ENCODE measurements at regions of chr14 and their contacts with region 1.

Region 1: DNA sequence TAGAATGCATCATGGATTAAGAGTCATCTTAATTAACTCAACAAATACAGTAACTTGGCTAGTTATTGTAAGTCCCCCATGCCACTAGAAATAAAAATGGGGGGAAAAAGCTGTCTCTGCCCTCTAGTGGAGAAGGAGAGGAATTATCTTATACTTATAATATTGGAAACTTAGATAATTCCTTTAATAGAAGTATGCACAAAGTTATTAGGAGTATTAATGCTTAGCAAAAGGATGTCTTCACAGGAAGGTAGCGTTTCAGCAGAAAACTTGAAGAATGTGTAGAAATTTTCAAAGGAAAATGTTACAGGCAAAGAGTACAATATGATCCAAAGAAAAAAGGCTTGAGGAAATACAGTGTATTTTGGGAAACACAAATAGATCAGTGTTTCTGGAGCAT is 19.8 kb downstream of the OR5AU1 start:
- DNase-seq: no peak
- H3K4me3 ChIP-seq: no peak overlapping the region
- H3K27ac ChIP-seq: no peak overlapping the region
- H3K4me1 ChIP-seq: peaks cover 0 to 3% (median 0%) of the 10 kb centered on the region in 4 experiments; a peak in 5 of 7 replicates
- H3K27me3 ChIP-seq: peaks cover 0 to 1% (median 0%) of the 10 kb centered on the region in 4 experiments; a peak in 1 of 7 replicates
- CTCF ChIP-seq: peak in 2 of 3 experiments; percentile 19 to 55; a peak in 2 of 4 replicates
- EP300 ChIP-seq: no peak
- POLR2A ChIP-seq: no peak
- RAD21 ChIP-seq: peak in 1 of 2 experiments; percentile 26; a peak in 2 of 4 replicates

Region 2: GRCh38 chr14:21059842-21060613 is 76.0 kb before region 1 on chr14:
- CTCF ChIA-PET with region 1: no interaction called
- POLR2A ChIA-PET with region 1: no interaction called
- DNase-seq: no peak
- H3K4me3 ChIP-seq: no peak overlapping the region
- H3K27ac ChIP-seq: no peak overlapping the region
- H3K4me1 ChIP-seq: no peaks in the 10 kb centered on the region; a peak in 2 of 7 replicates
- H3K27me3 ChIP-seq: no peaks in the 10 kb centered on the region; a peak in 1 of 7 replicates
- CTCF ChIP-seq: no peak
- EP300 ChIP-seq: no peak
- POLR2A ChIP-seq: no peak
- RAD21 ChIP-seq: no peak

Region 3: GRCh38 chr14:21121106-21121505 is 14.9 kb before region 1 on chr14:
- CTCF ChIA-PET with region 1: interaction called, 28 read pairs
- POLR2A ChIA-PET with region 1: no interaction called
- DNase-seq: no peak
- H3K4me3 ChIP-seq: no peak overlapping the region
- H3K27ac ChIP-seq: no peak overlapping the region
- H3K4me1 ChIP-seq: no peaks in the 10 kb centered on the region
- H3K27me3 ChIP-seq: no peaks in the 10 kb centered on the region
- CTCF ChIP-seq: no peak
- EP300 ChIP-seq: no peak
- POLR2A ChIP-seq: no peak
- RAD21 ChIP-seq: no peak

Region 4: GRCh38 chr14:21155963-21156362 is 19.9 kb after region 1 on chr14 and contains the start of gene OR5AU1:
- CTCF ChIA-PET with region 1: interaction called, 11 read pairs
- POLR2A ChIA-PET with region 1: no interaction called
- DNase-seq: no peak
- H3K4me3 ChIP-seq: no peak within 1 kb of the TSS
- H3K27ac ChIP-seq: no peak within 1 kb of the TSS
- H3K4me1 ChIP-seq: no peaks in the 10 kb centered on the region
- H3K27me3 ChIP-seq: no peaks in the 10 kb centered on the region
- CTCF ChIP-seq: no peak
- EP300 ChIP-seq: no peak
- POLR2A ChIP-seq: no peak
- RAD21 ChIP-seq: no peak
- total RNA-seq, gene OR5AU1: not detected in 2 replicates

Region 5: DNA sequence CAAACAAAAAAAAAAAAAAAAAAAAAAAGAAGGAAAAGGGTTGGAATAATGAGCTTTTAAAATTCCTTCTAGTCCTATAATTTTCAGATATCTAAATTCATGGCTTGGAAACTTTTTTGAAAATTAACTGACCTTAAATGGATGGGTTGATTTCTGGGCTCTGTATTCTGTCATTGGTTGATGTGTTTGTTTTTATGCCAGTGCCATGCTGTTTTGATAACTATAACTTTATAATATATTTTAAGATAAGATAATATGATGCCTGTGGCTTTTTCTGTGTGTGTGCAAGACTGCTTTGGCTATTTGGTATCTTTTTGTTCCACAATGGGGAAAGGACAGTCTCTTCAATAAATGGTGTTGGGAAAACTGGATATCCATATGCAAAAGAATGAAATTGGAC is 436.6 kb after region 1 on chr14:
- CTCF ChIA-PET with region 1: no interaction called
- POLR2A ChIA-PET with region 1: no interaction called
- DNase-seq: no peak
- H3K4me3 ChIP-seq: no peak overlapping the region
- H3K27ac ChIP-seq: no peak overlapping the region
- H3K4me1 ChIP-seq: no peaks in the 10 kb centered on the region
- H3K27me3 ChIP-seq: no peaks in the 10 kb centered on the region
- CTCF ChIP-seq: no peak
- EP300 ChIP-seq: no peak
- POLR2A ChIP-seq: no peak
- RAD21 ChIP-seq: no peak